ENCODE measurements at regions of chr3 and their contacts with region 1.

Region 1: GRCh38 chr3:170180908-170181879 is at the start of gene PHC3:
- DNase-seq: peak; percentile 87 to 96 (median 92)
- H3K4me3 ChIP-seq: peak within 1 kb of the TSS; percentile 51 to 99 (median 94)
- H3K27ac ChIP-seq: peak within 1 kb of the TSS; percentile 54 to 99 (median 95)
- H3K27me3 ChIP-seq: no peaks in the 10 kb centered on the region
- CTCF ChIP-seq: peak in 46 of 56 donors; percentile 10 to 65 (median 38)
- total RNA-seq, gene PHC3: 76.0 to 170 (median 110) TPM

Region 2: DNA sequence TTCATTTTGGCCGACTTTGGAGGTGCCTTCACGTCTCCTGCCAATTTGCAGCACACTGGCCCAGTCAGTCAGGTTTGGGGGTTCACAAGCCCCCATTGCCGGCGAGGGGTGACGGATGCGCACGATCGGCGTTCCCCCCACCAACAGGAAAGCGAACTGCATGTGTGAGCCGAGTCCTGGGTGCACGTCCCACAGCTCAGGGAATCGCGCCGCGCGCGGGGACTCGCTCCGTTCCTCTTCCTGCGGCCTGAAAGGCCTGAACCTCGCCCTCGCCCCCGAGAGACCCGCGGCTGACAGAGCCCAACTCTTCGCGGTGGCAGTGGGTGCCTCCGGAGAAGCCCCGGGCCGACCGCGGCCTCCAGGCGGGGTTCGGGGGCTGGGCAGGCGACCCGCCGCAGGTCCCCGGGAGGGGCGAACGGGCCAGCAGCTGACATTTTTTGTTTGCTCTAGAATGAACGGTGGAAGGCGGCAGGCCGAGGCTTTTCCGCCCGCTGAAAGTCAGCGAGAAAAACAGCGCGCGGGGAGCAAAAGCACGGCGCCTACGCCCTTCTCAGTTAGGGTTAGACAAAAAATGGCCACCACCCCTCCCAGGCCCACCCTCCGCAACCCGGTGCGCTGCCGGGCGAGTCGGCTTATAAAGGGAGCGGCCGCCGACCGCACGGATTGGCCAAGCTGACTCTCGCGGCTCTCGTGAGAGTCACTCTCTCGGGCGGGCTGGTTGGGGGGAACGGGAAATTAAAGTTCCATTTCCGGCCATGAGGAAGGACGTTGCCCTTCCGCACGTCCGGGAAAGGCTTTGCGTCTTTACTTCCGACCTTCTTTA is 416.5 kb before region 1 on chr3 and contains the start of gene TERC:
- intact Hi-C with region 1: loop called in 1 of 2 experiments (anchors 10 kb)
- DNase-seq: peak; percentile 81 to 96 (median 91)
- H3K4me3 ChIP-seq: peak within 1 kb of the TSS; percentile 63 to 98 (median 89)
- H3K27ac ChIP-seq: peak within 1 kb of the TSS; percentile 86 to 100 (median 97)
- H3K27me3 ChIP-seq: no peaks in the 10 kb centered on the region
- CTCF ChIP-seq: peak in 14 of 56 donors; percentile 4 to 28 (median 12)
- total RNA-seq, gene TERC: 1.6 to 15.3 (median 4.5) TPM in 78 of 120 experiments, not detected in the others

Region 3: GRCh38 chr3:169863458-169863899 is 317.7 kb before region 1 on chr3:
- intact Hi-C with region 1: loop called in 1 of 2 experiments (anchors 10 kb)
- DNase-seq: peak in 6 of 10 donors; percentile 19 to 77 (median 68)
- H3K4me3 ChIP-seq: peak overlapping the region in 6 of 59 donors; percentile 1 to 45 (median 14)
- H3K27ac ChIP-seq: no peak overlapping the region
- H3K27me3 ChIP-seq: no peaks in the 10 kb centered on the region
- CTCF ChIP-seq: peak; percentile 81 to 97 (median 94)

Region 4: DNA sequence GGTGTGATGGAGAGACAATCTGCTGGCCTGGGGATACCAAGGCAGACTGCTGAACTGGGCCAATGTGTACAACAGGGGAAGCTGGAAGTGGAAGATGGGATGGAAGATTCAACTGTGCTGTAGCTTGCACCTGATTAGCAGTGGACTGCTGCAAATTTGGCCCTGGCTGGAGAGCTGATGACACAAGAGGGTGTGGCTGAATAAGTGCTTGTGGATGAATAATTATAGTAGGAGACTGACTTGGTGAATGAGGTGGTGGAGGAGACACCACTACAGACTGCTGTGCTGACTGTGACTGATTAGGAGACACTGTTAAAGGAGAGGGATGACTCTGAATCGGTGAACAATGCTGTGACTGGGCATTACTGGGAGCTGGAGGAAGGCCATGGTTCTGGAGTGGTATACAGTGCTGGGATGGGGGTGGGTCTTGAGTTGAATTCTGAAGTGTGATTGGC is 52.2 kb before region 1 on chr3:
- intact Hi-C with region 1: no loop called
- DNase-seq: no peak
- H3K4me3 ChIP-seq: no peak overlapping the region
- H3K27ac ChIP-seq: no peak overlapping the region
- H3K27me3 ChIP-seq: no peaks in the 10 kb centered on the region
- CTCF ChIP-seq: no peak

Region 5: DNA sequence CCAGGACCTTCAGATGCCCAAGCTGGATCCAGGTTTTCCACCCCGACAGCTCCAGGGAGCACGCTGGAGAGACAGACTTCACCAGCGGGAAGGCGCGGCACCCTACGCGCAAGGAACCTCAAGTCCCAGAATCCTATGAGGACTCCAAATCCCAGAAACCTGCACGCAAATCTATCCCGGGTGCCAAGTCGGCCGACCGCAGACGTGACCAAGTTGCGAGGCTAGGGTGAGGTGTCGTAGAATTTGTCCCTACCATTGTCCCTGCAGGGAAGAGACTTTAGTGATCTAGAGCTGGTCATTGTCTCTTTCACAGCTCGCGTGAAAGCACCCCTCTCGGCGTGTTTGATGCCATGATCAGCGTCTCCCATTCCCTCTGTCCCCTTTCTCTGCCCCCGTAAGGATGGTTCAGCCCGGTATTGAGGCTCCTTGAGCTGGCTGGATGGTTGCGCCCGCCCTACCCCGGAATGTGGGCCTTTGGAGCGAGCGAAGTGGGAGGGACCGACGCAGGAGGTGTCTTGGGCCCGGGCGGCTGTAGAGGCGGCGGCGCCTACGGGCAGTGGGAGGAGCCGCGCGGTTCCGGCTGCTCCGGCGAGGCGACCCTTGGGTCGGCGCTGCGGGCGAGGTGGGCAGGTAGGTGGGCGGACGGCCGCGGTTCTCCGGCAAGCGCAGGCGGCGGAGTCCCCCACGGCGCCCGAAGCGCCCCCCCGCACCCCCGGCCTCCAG is 40.9 kb after region 1 on chr3 and contains the start of gene PRKCI:
- intact Hi-C with region 1: loop called (anchors 2 to 5 kb)
- DNase-seq: peak; percentile 87 to 96 (median 94)
- H3K4me3 ChIP-seq: peak within 1 kb of the TSS; percentile 51 to 98 (median 84)
- H3K27ac ChIP-seq: peak within 1 kb of the TSS; percentile 60 to 98 (median 91)
- H3K27me3 ChIP-seq: no peaks in the 10 kb centered on the region
- CTCF ChIP-seq: peak in 13 of 56 donors; percentile 4 to 30 (median 14)
- total RNA-seq, gene PRKCI: 14.6 to 73.6 (median 39.8) TPM

Region 6: GRCh38 chr3:170247875-170248274 is 66.7 kb after region 1 on chr3:
- intact Hi-C with region 1: no loop called
- DNase-seq: no peak
- H3K4me3 ChIP-seq: no peak overlapping the region
- H3K27ac ChIP-seq: no peak overlapping the region
- H3K27me3 ChIP-seq: no peaks in the 10 kb centered on the region
- CTCF ChIP-seq: no peak

Region 7: GRCh38 chr3:170309046-170309445 is 127.9 kb after region 1 on chr3:
- intact Hi-C with region 1: no loop called
- DNase-seq: no peak
- H3K4me3 ChIP-seq: no peak overlapping the region
- H3K27ac ChIP-seq: no peak overlapping the region
- H3K27me3 ChIP-seq: no peaks in the 10 kb centered on the region
- CTCF ChIP-seq: no peak

Region 8: DNA sequence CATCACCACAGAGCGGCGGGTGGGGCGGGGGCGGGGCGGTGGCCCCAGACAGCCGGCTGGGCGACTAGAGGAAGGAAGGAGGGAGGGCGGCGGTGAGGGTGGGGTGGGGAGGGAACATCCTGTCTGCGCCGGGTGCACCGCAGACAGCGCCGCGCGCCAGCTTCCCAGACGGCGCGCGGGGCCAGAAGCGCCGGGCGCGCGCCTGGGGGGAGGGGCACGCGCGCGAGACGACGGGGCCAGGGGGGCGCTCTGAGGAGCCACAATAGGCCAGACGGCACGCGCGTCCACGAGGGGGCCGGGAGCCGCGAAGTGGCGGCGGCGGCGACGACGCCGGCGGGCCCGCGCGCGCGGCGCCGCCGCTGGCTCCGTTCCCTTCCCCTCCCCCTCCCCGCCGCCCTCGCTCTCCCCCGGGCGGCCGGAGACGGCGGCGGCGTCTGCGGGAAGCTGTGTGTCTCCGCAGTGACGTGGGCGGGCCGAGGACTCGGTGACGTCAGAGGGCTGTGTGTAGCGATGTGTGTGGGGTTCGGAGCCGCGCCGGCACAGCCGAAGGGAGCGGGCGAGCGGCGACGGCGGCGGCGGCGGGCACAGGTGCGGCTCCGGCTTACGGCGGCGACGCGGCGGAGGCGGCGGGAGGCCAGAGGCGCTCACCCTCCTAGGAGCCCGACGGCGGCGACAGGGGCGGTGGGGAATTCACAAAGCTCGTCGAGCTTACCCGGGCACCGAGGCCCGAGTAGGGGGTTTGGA is 176.2 kb after region 1 on chr3 and contains the start of gene SKIL:
- intact Hi-C with region 1: loop called (anchors 2 to 5 kb)
- DNase-seq: peak; percentile 87 to 97 (median 96)
- H3K4me3 ChIP-seq: peak within 1 kb of the TSS; percentile 78 to 99 (median 94)
- H3K27ac ChIP-seq: peak within 1 kb of the TSS; percentile 90 to 100 (median 98)
- H3K27me3 ChIP-seq: no peaks in the 10 kb centered on the region
- CTCF ChIP-seq: peak in 16 of 56 donors; percentile 6 to 46 (median 20)
- total RNA-seq, gene SKIL: 30.8 to 77.5 (median 52.6) TPM

Region 9: GRCh38 chr3:170848292-170848917 is 667.2 kb after region 1 on chr3:
- intact Hi-C with region 1: loop called in 1 of 2 experiments (anchors 10 kb)
- DNase-seq: no peak
- H3K4me3 ChIP-seq: no peak overlapping the region
- H3K27ac ChIP-seq: no peak overlapping the region
- H3K27me3 ChIP-seq: no peaks in the 10 kb centered on the region
- CTCF ChIP-seq: peak in 54 of 56 donors; percentile 12 to 67 (median 44)